Posterior vena cava (tissue), 2 donors: ENCODE measurements at regions of chr18 and their contacts with region 1.

Region 1: GRCh38 chr18:61398961-61399705 is 65.9 kb downstream of the CDH20 start:
- DNase-seq: no peak

Region 2: DNA sequence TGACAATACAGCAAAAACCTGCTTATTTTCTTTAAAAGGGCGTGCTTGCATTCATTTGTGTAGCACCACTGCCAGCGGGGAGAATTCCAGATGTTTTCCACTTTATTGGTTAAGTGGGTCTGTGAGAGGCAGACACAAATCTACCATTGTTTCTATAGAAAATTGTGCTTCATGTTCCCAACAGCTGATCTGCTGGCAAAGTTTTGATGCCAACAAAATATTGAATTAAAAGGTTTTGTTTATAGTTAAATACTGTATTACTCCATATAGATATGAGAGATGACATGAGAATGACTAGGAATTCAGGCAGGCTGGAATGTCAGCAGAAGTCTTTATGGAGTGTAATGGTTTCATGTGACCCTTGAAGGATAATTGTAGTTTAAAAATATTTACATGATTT is 1209.3 kb before region 1 on chr18:
- intact Hi-C with region 1: loop called in 1 of 2 experiments (anchors 10 kb)
- DNase-seq: no peak